Gastrocnemius medialis (tissue), 4 donors: ENCODE measurements at regions of chr16 and their contacts with region 1.

Region 1: DNA sequence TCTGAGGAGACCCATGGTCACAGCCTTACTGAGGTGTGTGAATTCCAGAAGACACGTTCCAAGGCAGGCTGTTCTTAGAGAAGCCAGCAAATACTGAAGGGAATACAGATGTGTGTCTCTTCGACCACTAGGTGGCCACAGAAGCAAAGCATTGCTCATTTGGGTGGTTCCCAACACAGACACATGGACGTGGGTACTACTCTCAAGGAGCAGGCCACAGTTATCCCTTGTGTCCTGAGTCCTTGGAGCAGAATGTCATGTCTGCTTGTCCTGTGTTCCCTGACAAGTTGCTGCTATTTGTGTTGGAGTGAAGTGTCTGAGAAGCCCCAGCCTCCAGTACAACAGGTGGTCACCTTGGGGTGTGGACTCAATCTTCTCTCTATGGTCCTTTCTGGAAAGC is 30.3 kb downstream of the HMOX2 start:
- DNase-seq: peak; percentile 44 to 74
- ATAC-seq: peak; percentile 95 to 97
- H3K4me3 ChIP-seq: no peak overlapping the region
- H3K27ac ChIP-seq: peak overlapping the region in 3 of 4 donors; percentile 22 to 46 (median 45)
- H3K4me1 ChIP-seq: peaks cover 3 to 12% of the 10 kb centered on the region in 2 donors
- H3K27me3 ChIP-seq: no peaks in the 10 kb centered on the region
- CTCF ChIP-seq: peak; percentile 75 to 86 (median 81)
- POLR2A ChIP-seq: no peak

Region 2: DNA sequence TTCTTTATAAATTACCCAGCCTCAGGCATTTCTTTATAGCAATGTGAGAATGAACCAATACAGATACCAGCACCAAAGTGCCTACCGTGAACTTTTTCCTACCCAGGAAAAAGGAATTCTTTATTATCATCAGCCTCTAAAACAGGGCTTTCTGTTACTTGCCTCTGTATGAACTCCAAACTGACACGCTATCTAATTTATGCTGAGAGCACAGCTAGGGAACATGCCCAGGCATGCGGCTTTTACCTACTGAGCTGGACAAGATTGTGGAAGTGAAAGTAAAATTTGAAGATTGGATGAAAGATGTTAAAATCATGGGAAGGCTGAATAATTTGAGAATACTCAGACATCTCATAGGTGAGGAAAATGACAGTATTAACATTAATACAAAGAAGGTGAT is 365.8 kb before region 1 on chr16:
- in situ Hi-C with region 1: no loop called
- intact Hi-C with region 1: no loop called
- DNase-seq: no peak
- ATAC-seq: no peak
- H3K4me3 ChIP-seq: no peak overlapping the region
- H3K27ac ChIP-seq: no peak overlapping the region
- H3K4me1 ChIP-seq: no peaks in the 10 kb centered on the region
- H3K27me3 ChIP-seq: no peaks in the 10 kb centered on the region
- CTCF ChIP-seq: no peak
- POLR2A ChIP-seq: no peak

Region 3: DNA sequence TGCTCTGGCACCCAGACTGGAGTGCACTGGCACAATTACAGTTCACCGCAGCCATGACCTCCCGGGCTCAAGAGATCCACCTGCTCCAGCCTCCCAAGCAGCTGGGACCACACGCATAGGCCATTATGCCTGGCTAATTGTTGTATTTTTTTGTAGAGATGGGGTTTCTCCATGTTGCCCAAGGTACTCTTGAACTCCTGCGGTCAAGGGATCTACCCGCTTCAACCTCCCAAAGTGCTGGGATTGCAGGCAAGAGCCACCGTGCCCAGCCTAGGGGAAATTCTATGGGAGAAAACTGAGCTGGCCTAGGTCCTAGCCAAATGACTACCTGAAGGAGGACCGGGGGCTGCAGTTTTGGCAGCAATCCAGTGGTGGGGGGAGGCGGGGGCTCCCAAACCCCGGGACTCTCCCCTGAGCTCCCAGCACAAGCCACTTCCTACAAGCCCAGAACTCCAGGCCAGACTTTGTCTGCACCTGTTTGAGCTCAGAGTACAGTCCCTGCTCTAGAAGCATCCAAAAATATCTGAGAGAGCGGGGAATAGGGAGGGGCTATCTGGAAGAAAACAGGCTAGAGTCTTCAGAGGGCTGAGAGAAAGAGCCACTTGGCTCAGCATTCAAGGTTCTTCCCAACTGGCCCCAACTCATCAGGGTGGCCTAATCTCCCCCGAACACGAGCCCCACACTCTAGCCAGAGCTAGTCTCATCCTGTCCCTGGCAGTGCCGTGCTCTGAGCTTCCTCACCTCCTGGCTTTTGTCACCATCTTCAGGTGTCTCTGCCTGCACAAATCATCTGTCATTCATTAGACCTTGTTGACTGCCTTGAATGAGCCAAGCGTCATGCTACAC is 273.7 kb before region 1 on chr16:
- in situ Hi-C with region 1: no loop called
- intact Hi-C with region 1: no loop called
- DNase-seq: peak; percentile 86 to 96
- ATAC-seq: peak; percentile 80 to 87
- H3K4me3 ChIP-seq: peak overlapping the region; percentile 26 to 38 (median 34)
- H3K27ac ChIP-seq: peak overlapping the region; percentile 89 to 99 (median 98)
- H3K4me1 ChIP-seq: peaks cover 55 to 85% of the 10 kb centered on the region in 2 donors
- H3K27me3 ChIP-seq: no peaks in the 10 kb centered on the region
- CTCF ChIP-seq: peak in 1 of 5 experiments; percentile 15
- POLR2A ChIP-seq: peak; percentile 63 to 70

Region 4: GRCh38 chr16:4487955-4488498 is 18.4 kb before region 1 on chr16:
- in situ Hi-C with region 1: no loop called
- intact Hi-C with region 1: no loop called
- DNase-seq: no peak
- ATAC-seq: peak; percentile 22 to 30
- H3K4me3 ChIP-seq: no peak overlapping the region
- H3K27ac ChIP-seq: peak overlapping the region; percentile 2 to 61 (median 28)
- H3K4me1 ChIP-seq: peaks cover 12 to 21% of the 10 kb centered on the region in 2 donors
- H3K27me3 ChIP-seq: no peaks in the 10 kb centered on the region
- CTCF ChIP-seq: no peak
- POLR2A ChIP-seq: no peak

Region 5: DNA sequence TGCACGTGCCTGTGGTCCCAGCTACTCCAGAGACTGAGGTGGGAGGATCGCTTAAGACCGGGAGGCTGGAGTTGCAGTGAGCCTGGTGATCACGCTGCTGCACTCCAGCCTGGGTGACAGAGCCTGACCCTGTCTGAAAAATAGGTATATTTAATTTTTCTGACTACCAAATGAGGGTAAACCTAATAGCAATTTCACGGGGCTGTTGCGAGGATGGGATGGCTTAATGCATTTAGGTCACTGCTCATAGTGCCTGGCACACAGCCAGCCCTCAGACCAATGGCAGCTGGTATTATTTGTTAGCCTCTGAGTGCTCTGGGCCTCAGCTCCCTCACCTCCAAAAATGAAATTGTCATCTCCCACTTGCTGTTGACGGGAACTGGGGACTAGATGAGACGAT is 38.0 kb after region 1 on chr16:
- in situ Hi-C with region 1: loop called in 1 of 4 experiments (anchors 5 kb)
- intact Hi-C with region 1: loop called (anchors 1 kb)
- DNase-seq: no peak
- ATAC-seq: no peak
- H3K4me3 ChIP-seq: no peak overlapping the region
- H3K27ac ChIP-seq: no peak overlapping the region
- H3K4me1 ChIP-seq: no peaks in the 10 kb centered on the region
- H3K27me3 ChIP-seq: no peaks in the 10 kb centered on the region
- CTCF ChIP-seq: no peak
- POLR2A ChIP-seq: no peak

Region 6: GRCh38 chr16:4583906-4584305 is 77.5 kb after region 1 on chr16:
- in situ Hi-C with region 1: no loop called
- intact Hi-C with region 1: loop called (anchors 2 kb)
- DNase-seq: no peak
- ATAC-seq: no peak
- H3K4me3 ChIP-seq: no peak overlapping the region
- H3K27ac ChIP-seq: no peak overlapping the region
- H3K4me1 ChIP-seq: no peaks in the 10 kb centered on the region
- H3K27me3 ChIP-seq: no peaks in the 10 kb centered on the region
- CTCF ChIP-seq: no peak
- POLR2A ChIP-seq: no peak

Region 7: GRCh38 chr16:4624015-4624826 is 117.8 kb after region 1 on chr16 and contains the start of gene MGRN1:
- in situ Hi-C with region 1: loop called in 1 of 4 experiments (anchors 25 kb)
- intact Hi-C with region 1: loop called (anchors 5 kb)
- DNase-seq: peak; percentile 93 to 95
- ATAC-seq: peak; percentile 97 to 98
- H3K4me3 ChIP-seq: peak within 1 kb of the TSS; percentile 77 to 97 (median 82)
- H3K27ac ChIP-seq: peak within 1 kb of the TSS; percentile 88 to 96 (median 94)
- H3K4me1 ChIP-seq: peaks cover 19% of the 10 kb centered on the region in 2 donors
- H3K27me3 ChIP-seq: no peaks in the 10 kb centered on the region
- CTCF ChIP-seq: peak; percentile 91 to 97 (median 95)
- POLR2A ChIP-seq: no peak
- total RNA-seq, gene MGRN1: 33.8 to 62.9 (median 55.0) TPM